Right ventricle myocardium superior (tissue), 1 donor: ENCODE measurements at regions of chr10 and their contacts with region 1.

Region 1: DNA sequence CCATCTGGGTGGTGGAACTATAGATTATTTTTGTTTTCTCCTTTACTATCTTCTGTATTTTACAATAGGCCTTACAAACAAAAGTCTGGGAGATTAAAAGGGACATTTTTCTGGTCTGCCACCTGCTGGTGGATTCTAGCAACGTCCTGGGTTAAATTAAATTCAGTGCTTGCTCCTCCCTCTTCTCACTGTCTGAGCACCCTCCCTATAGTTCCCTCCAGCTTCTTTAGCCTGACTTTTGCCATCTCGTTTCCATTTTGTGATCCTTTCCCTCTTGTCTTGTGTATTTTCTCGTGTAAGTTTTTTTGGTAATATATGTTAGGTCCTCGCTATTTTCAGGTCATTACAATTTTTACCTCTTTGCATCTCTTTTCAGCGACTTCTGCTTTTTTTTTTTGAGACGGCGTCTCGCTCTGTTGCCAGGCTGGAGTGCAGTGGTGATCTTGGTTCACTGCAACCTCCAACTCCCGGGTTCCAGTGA is 16.1 kb downstream of the ANKRD16 start:
- DNase-seq: no peak
- ATAC-seq: peak; percentile 87

Region 2: GRCh38 chr10:5446390-5446926 is 427.1 kb before region 1 on chr10:
- intact Hi-C with region 1: loop called (anchors 10 kb)
- DNase-seq: peak; percentile 95
- ATAC-seq: peak; percentile 96

Region 3: DNA sequence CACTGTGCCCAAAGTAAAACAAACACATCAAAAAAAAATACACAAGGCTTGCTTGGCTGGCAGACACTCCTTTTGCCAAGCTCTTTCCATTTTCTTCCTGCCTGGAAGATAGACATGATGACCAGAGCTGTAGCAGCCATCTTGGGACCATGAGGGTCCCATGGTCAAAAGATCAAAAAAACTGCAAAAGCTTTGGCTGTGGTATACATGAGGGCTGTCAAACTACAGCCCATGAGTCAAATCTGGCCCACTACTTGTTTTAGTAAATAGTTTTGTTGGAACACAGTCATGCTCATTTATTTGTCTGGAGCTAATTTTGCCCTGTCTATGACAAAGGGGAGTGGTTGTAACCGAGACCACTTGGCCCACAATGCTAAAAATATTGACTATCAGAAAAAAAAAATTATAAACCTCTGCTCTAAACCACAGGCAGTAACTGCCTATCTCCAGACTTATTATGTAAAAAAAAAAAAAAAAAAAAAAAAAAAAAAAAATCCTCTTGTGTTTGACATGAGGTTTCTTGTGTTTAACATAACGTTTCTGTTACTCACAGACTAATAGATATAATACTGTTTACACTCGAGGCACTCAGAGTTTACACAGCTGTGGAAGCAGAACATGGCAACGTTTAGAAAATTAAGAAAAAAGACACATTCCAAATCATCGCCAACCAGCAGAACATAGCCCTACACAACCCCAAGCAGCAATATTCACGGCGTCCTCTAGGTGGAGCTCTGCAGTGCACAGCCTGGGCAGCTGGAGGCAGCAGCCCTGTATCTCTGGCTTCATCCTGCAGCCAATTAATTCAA is 244.0 kb before region 1 on chr10:
- intact Hi-C with region 1: loop called (anchors 10 kb)
- DNase-seq: peak; percentile 90
- ATAC-seq: peak; percentile 88

Region 4: GRCh38 chr10:5684318-5684970 is 189.1 kb before region 1 on chr10 and contains the start of gene TASOR2:
- intact Hi-C with region 1: loop called (anchors 10 kb)
- DNase-seq: peak; percentile 99
- ATAC-seq: peak; percentile 99
- total RNA-seq, gene TASOR2: 35.8 TPM

Region 5: DNA sequence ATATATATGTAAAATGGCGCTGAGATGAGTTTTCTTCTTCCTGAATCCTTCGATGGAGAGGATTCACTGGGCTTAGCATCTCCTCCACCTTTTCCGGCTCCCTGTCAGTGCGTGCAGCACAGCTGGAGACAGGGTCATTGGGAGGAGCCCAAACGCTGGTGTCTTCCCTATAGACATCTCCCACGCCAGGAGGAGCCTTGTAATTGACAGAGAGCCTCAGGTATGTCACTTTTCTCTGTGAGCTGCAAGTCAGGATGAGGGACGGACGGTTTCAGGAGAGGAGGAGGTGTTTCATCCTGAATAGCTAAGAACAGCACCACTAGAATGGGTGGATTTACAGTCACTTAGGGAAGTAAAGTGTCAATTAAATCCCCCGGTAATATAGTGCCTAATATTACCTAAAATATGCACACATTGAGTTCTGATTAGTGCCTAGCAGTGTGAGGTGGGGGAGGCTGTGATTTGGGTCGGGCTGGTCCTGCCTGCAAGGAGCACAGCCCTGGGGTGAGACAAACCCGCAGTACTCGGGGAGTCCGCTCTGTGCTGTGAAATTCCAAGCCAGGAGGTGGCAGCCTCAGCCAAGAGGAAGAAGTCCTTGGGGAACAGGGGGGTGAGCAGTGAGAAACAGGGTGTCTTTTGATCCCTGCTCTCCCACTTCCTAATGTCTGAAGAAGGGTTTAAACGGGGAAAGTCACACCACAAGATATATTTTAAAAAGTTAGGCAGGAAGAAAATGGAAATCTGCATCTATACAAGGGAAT is 75.6 kb after region 1 on chr10:
- intact Hi-C with region 1: no loop called
- DNase-seq: peak; percentile 72
- ATAC-seq: peak; percentile 62